Mammary epithelial cell (primary cell): ENCODE measurements at regions of chr4 and their contacts with region 1.

Region 1: DNA sequence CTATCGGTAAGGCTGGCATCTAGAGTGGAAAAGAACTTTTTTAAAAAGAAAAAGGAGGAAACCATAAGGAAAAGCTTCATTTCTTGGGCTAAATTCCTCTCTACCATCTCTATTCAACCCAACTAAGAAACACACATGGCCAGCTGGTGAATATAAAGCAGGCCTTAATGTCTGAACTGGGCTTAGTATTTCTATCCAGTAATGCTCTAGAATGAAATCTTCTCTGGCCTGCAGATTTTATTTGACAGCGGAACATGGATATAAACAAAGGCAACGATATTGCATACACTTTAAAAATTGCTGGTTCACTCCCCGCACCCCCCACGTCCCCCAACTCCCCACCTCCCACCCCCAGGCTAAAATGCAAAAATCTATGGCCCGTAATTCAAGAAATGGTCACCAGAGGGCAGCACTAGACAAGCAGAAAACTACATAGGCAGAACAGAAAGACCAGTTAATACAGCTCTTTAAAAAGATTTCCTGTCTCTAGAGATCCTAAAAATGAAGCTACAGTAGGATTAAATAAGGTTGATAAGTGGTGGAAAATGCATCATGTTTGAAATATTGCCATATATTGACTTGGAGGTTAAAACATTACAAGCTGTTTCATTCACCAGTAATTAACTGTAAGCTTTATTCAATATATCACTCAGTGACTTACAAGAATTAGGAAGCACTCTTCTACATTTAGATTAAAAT is 155.2 kb upstream of the GALNT7 start:
- DNase-seq: no peak
- H3K4me3 ChIP-seq: no peak overlapping the region
- H3K27ac ChIP-seq: no peak overlapping the region
- H3K4me1 ChIP-seq: no peaks in the 10 kb centered on the region
- H3K27me3 ChIP-seq: no peaks in the 10 kb centered on the region
- CTCF ChIP-seq: peak; percentile 41 to 65

Region 2: DNA sequence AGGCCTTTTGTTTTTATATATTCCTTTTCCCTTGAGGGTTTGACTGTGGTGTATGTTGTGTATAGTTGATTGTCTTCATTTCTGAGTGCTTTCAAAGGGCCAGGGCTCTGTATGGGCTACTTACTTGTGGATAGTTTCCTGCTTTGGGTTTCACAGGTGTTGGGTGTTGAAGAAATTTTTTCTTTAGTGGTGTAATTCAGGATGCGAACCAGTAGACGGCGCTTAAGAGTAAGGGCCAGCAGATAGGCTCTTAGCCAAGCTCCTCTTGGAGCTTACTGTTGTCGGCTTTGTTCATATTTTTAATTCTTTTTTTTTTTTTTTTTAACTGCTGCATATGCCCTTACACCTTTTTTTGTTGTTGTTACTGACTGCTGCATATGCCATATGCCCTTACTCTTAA is 121.1 kb before region 1 on chr4:
- CTCF ChIA-PET with region 1: interaction called, 6 read pairs
- dilution Hi-C with region 1: no loop called
- in situ Hi-C with region 1: no loop called
- intact Hi-C with region 1: loop called (anchors 1 kb)
- DNase-seq: peak; percentile 25
- H3K4me3 ChIP-seq: no peak overlapping the region
- H3K27ac ChIP-seq: no peak overlapping the region
- H3K4me1 ChIP-seq: no peaks in the 10 kb centered on the region
- H3K27me3 ChIP-seq: no peaks in the 10 kb centered on the region
- CTCF ChIP-seq: peak; percentile 93 to 94

Region 3: GRCh38 chr4:173057901-173058300 is 44.5 kb after region 1 on chr4:
- CTCF ChIA-PET with region 1: interaction called, 22 read pairs
- dilution Hi-C with region 1: no loop called
- in situ Hi-C with region 1: no loop called
- intact Hi-C with region 1: no loop called
- DNase-seq: no peak
- H3K4me3 ChIP-seq: no peak overlapping the region
- H3K27ac ChIP-seq: no peak overlapping the region
- H3K4me1 ChIP-seq: no peaks in the 10 kb centered on the region
- H3K27me3 ChIP-seq: peaks cover 2% of the 10 kb centered on the region
- CTCF ChIP-seq: no peak

Region 4: DNA sequence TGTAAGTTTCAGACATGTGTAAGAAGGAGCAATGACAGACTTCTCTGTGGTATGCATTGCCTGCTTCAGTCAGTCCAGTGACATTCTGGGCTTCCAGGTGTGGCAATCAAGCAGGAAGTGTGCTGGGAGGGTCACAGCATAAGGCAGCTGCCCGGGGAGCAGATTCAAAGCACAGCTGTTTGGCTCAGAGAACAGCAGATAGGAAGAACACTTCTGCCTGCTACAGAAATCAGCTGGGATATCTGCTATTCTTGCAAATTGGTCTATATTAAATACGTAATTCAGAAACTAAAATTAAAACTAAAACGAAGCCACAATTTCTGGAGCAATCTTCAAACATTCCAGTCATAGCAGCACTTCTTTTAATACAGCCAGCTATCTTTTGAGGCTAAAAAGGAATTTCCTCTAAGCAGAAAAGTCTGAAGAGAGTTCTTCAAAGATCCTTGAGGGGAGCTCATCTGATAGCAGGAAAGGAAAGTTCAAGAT is 107.7 kb after region 1 on chr4:
- CTCF ChIA-PET with region 1: no interaction called
- dilution Hi-C with region 1: no loop called
- in situ Hi-C with region 1: no loop called
- intact Hi-C with region 1: no loop called
- DNase-seq: peak; percentile 39
- H3K4me3 ChIP-seq: no peak overlapping the region
- H3K27ac ChIP-seq: no peak overlapping the region
- H3K4me1 ChIP-seq: peaks cover 24% of the 10 kb centered on the region
- H3K27me3 ChIP-seq: no peaks in the 10 kb centered on the region
- CTCF ChIP-seq: no peak

Region 5: DNA sequence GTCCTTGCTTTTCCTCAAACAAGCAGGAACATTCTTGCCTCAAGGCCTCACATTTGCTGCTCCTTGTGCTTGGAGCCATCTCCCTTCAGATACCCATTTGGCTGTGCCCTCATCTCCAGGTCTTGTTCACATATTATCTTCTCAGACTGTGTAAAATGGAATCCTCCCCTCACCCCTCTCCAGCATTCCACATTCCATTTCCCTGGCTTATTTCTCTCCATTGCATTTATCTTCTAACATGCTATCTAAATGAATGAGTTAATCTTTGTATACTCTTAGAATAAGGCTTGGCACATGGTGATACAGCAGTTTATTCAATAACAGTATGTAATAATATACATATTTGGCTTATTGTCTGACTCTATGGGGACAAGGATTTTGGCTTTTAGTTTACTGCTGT is 146.4 kb after region 1 on chr4:
- CTCF ChIA-PET with region 1: no interaction called
- dilution Hi-C with region 1: no loop called
- in situ Hi-C with region 1: no loop called
- intact Hi-C with region 1: no loop called
- DNase-seq: no peak
- H3K4me3 ChIP-seq: no peak overlapping the region
- H3K27ac ChIP-seq: no peak overlapping the region
- H3K4me1 ChIP-seq: no peaks in the 10 kb centered on the region
- H3K27me3 ChIP-seq: no peaks in the 10 kb centered on the region
- CTCF ChIP-seq: no peak

Region 6: GRCh38 chr4:173252024-173252935 is 238.9 kb after region 1 on chr4:
- CTCF ChIA-PET with region 1: no interaction called
- dilution Hi-C with region 1: loop called (anchors 25 kb)
- in situ Hi-C with region 1: loop called in 1 of 2 experiments (anchors 5 kb)
- intact Hi-C with region 1: loop called (anchors 1 kb)
- DNase-seq: peak; percentile 99
- H3K4me3 ChIP-seq: no peak overlapping the region
- H3K27ac ChIP-seq: no peak overlapping the region
- H3K4me1 ChIP-seq: peaks cover 13% of the 10 kb centered on the region
- H3K27me3 ChIP-seq: no peaks in the 10 kb centered on the region
- CTCF ChIP-seq: no peak

Region 7: DNA sequence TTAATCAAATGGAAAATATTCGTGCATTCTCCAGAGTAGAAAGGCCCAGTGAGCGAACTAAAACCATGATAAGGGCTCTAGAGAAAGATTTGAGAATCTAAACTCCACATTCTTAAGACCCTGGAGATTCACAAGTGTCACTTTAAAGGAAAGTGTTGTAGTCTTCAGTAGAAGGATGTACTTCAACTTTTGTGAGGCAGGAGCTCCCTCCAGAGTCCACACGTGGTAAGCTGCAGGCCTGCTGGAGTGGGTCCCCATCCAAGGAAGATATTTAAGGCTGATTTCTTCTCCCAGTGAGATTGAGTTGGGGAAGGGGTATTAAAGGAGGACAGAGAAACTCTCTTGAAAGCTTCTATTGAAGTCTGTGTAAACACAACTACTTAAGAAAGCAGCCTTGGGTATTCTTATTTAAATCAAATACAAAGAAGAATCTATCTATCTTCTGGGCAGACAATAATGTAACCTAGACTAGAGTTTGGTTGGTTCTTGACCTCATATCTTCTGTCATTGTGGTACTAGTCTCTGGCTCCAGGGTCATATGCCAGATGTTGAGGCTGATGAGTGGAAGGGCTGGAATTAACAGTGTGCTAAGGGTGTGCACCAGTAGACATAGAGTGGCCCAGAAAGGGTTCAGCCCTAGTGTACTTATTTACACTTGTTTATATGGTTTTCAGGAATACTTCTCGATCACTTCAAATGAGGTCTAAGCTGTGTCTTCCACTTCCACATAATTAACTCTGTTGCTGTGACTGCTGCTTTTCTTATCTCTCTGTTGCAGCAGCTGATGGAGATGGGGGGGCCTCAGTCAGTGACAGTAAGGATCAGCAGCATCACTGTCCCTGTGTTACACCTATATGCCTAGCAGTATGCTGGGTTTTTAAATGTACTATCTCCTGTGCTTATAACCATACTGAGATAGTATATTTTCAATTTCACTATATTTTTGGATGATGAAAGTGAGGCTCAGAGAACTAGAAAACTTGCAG is 244.6 kb after region 1 on chr4:
- CTCF ChIA-PET with region 1: no interaction called
- dilution Hi-C with region 1: loop called (anchors 25 kb)
- in situ Hi-C with region 1: loop called in 1 of 2 experiments (anchors 5 kb)
- intact Hi-C with region 1: loop called (anchors 1 kb)
- DNase-seq: peak; percentile 38
- H3K4me3 ChIP-seq: no peak overlapping the region
- H3K27ac ChIP-seq: no peak overlapping the region
- H3K4me1 ChIP-seq: peaks cover 2% of the 10 kb centered on the region
- H3K27me3 ChIP-seq: no peaks in the 10 kb centered on the region
- CTCF ChIP-seq: peak; percentile 84 to 91

Region 8: GRCh38 chr4:173448603-173449379 is 435.4 kb after region 1 on chr4:
- CTCF ChIA-PET with region 1: no interaction called
- dilution Hi-C with region 1: no loop called
- in situ Hi-C with region 1: no loop called
- intact Hi-C with region 1: no loop called
- DNase-seq: no peak
- H3K4me3 ChIP-seq: no peak overlapping the region
- H3K27ac ChIP-seq: no peak overlapping the region
- H3K4me1 ChIP-seq: no peaks in the 10 kb centered on the region
- H3K27me3 ChIP-seq: no peaks in the 10 kb centered on the region
- CTCF ChIP-seq: no peak

Region 9: DNA sequence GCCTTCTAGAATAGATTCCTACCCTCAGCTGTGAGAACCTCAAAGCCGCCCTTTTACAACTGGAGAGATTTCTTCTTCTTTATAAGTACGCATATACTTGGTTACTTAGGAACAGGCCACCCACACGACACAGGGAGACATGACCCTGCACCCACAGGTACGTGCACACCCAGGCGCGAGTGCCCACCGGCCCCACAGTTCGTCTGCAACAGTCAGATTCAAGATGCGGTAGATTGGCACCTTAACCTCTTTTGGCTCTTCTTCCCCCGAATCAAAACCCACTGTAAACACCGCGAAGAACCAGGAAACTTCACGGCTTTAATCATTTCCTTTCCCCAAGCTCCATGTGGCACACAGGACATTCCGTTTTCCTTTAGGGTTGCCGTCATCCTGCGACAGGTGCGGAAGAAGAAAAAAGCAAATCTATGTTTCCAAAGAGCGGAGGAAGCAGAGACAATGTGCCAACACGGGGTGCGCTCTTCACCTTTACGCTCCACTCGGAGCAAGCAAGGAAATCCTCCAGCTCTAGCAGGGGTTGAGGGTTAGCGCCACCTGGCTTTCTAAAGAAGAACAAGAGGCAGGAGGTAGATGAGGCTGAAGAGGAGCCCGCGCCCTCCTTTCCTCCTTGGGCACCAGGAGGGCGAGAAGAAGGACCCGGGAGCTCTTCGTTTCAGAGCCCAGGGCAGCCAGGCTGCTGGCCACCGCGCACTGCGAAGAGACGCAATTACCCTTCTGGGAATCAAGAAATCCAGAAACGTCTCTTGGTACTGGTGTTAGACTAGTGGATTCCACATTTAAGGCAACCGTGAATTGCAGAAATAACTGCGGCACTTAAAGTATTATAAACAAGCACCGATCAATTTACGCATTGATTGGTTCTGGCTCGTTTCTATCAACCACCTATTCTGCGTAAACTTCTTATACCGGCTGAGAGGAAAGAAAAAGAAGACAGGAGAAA is 480.9 kb after region 1 on chr4:
- CTCF ChIA-PET with region 1: no interaction called
- dilution Hi-C with region 1: no loop called
- in situ Hi-C with region 1: no loop called
- intact Hi-C with region 1: loop called (anchors 2 kb)
- DNase-seq: peak; percentile 66
- H3K4me3 ChIP-seq: peak overlapping the region; percentile 18 to 43 (median 42)
- H3K27ac ChIP-seq: no peak overlapping the region
- H3K4me1 ChIP-seq: no peaks in the 10 kb centered on the region
- H3K27me3 ChIP-seq: no peaks in the 10 kb centered on the region
- CTCF ChIP-seq: peak; percentile 78 to 88